ENCODE measurements at regions of chr1 and their contacts with region 1.

Region 1: DNA sequence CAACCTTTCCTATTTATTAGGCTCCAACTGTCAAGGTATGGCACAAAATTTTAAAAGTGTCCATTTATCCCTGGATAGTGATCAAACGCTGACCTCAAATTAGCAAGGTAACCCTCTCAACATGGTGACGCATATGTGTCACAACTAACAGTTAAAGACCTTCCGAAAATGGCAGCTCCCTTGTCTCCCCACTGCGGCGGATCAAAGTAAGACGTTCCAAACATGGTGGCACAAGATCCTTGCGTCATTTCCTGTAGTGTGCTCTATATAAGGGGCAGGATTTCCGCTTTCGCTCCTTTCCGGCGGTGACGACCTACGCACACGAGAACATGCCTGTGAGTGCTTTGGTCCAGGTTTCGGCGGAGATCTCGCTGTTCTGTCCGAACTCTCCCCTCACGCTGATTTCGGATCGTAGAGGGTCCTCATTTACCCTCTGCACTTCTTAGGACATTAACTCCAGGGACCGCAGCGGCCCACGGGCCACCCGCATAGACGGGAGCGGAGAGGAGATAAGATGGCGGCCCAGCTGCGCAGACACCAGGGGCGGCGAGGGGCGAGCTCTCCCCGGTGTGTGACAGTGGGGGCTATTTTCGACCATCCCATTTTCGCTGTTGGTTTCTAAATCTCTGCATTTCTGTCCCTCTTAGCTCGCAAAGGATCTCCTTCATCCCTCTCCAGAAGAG is at the start of gene RPS27:
- DNase-seq: peak; percentile 77 to 98 (median 84)
- ATAC-seq: peak; percentile 85
- H3K4me3 ChIP-seq: peak within 1 kb of the TSS; percentile 71
- H3K4me3 Mint-ChIP-seq: peak within 1 kb of the TSS; percentile 97
- H3K27ac ChIP-seq: peak within 1 kb of the TSS; percentile 97
- H3K27ac Mint-ChIP-seq: peak within 1 kb of the TSS; percentile 96
- H3K4me1 ChIP-seq: peaks cover 40% of the 10 kb centered on the region
- H3K4me1 Mint-ChIP-seq: peaks cover 49% of the 10 kb centered on the region
- H3K27me3 ChIP-seq: peaks cover 0 to 3% of the 10 kb centered on the region in 2 experiments
- H3K27me3 Mint-ChIP-seq: peaks cover 9% of the 10 kb centered on the region
- CTCF ChIP-seq: no peak
- total RNA-seq, gene RPS27: 7,636 to 8,442 TPM

Region 2: GRCh38 chr1:153670859-153671627 is 319.6 kb before region 1 on chr1 and contains the start of gene ILF2:
- CTCF ChIA-PET with region 1: no interaction called
- POLR2A ChIA-PET with region 1: interaction called, 16 read pairs
- intact Hi-C with region 1: loop called (anchors 2 to 5 kb)
- DNase-seq: peak; percentile 94 to 100 (median 97)
- ATAC-seq: peak; percentile 87
- H3K4me3 ChIP-seq: peak within 1 kb of the TSS; percentile 84
- H3K4me3 Mint-ChIP-seq: no peak within 1 kb of the TSS
- H3K27ac ChIP-seq: peak within 1 kb of the TSS; percentile 89 to 91
- H3K27ac Mint-ChIP-seq: no peak within 1 kb of the TSS
- H3K4me1 ChIP-seq: peaks cover 36% of the 10 kb centered on the region
- H3K4me1 Mint-ChIP-seq: peaks cover 25% of the 10 kb centered on the region
- H3K27me3 ChIP-seq: no peaks in the 10 kb centered on the region
- H3K27me3 Mint-ChIP-seq: no peaks in the 10 kb centered on the region
- CTCF ChIP-seq: peak; percentile 28
- total RNA-seq, gene ILF2: 140 to 147 TPM

Region 3: DNA sequence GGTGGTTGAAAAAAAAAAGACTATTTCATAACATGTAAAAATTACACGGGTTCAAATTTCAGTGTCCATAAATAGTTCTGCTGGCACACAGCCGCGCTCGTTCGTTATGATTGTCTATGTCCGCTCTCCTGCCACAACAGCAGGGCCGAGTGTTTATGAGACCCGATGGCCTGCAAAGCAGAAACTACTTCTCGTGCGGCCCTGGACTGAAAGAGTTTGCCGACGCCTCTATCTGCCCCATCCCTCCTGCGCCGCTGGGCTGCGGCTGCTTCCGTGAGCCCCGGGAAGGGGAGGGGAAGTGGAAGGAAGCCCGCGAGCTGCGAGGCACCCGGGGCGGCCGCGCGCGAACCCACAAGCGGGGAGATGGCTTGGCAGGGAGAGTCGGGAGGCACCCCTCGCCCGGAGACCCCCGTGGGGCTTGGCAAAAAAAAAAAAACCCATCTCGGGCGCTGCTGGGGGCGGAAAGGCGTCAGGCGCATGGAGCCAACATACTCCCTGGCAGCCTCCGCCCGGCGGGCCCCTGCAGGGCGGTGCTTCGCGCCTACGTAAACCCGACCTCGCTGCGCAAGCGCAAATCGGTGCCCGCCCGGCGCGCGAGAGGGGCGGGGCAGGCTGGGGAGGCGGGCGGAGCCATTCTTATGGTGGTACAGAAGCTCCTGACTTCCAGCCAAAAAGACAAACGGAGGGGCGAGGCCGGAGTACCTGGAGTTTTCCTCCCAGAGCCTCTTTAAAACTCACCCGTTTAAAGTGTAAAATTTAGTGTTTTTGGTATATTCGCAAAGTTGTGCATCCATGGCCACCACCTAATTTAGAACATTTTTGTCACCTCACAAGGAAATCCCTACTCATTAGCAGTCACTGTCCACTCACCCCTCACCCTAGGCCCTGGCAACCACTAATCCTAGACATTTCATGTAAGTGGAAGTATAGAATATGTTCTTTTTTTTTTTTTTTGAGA is 207.1 kb before region 1 on chr1:
- CTCF ChIA-PET with region 1: interaction called, 3 read pairs
- POLR2A ChIA-PET with region 1: interaction called, 26 read pairs
- intact Hi-C with region 1: no loop called
- DNase-seq: peak; percentile 83 to 95 (median 89)
- ATAC-seq: peak; percentile 95
- H3K4me3 ChIP-seq: peak overlapping the region; percentile 73
- H3K4me3 Mint-ChIP-seq: peak overlapping the region; percentile 94
- H3K27ac ChIP-seq: peak overlapping the region; percentile 96 to 97
- H3K27ac Mint-ChIP-seq: peak overlapping the region; percentile 97
- H3K4me1 ChIP-seq: peaks cover 16% of the 10 kb centered on the region
- H3K4me1 Mint-ChIP-seq: peaks cover 11% of the 10 kb centered on the region
- H3K27me3 ChIP-seq: no peaks in the 10 kb centered on the region
- H3K27me3 Mint-ChIP-seq: peaks cover 8% of the 10 kb centered on the region
- CTCF ChIP-seq: no peak

Region 4: GRCh38 chr1:153816283-153816889 is 174.2 kb before region 1 on chr1:
- CTCF ChIA-PET with region 1: interaction called, 5 read pairs
- POLR2A ChIA-PET with region 1: interaction called, 4 read pairs
- intact Hi-C with region 1: loop called (anchors 1 kb)
- DNase-seq: no peak
- ATAC-seq: no peak
- H3K4me3 ChIP-seq: no peak overlapping the region
- H3K4me3 Mint-ChIP-seq: no peak overlapping the region
- H3K27ac ChIP-seq: no peak overlapping the region
- H3K27ac Mint-ChIP-seq: no peak overlapping the region
- H3K4me1 ChIP-seq: no peaks in the 10 kb centered on the region
- H3K4me1 Mint-ChIP-seq: no peaks in the 10 kb centered on the region
- H3K27me3 ChIP-seq: no peaks in the 10 kb centered on the region
- H3K27me3 Mint-ChIP-seq: no peaks in the 10 kb centered on the region
- CTCF ChIP-seq: no peak

Region 5: DNA sequence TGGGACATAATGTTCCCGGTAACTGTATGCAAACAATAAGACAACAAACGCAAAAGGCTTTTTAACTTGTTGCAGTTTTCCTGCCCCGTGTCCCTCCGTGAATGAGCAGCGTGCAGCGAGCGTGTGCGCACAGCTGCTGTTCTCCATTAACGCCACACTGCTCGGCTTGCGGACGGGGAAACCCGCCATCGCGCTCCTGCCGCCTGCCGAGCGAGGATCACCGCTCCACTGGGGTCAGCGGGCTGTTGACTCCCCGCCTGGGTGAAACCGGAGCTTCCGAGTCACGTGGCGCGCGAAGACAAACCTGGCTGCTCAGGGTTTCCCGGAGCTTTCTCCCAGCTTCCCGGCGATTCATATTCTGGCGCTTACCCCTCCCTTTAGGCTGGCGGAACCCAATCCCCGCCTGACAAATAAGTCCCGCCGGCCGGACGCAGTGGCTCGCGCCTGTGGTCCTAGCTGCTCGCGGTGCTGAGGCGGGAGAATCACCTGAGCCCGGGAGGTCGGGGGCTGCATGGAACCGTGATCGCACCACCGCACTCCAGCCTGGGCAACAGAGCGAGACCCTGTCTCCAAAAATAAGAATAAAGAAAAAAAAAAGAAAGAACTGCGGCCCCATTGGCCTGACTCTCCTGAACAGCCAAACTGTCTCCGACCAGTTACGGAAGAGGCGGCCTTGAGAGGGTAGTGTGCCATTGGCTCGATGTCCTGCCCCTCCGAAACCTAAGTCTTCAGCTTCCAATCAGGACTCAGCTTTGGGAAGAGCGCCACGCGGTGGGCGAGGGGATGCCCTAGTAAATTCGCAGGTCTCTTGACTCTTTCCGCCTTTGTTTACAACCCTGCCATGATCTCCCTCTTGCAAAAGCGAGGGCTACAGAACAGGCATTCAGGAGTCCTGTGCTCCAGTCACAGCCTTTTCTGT is 23.3 kb before region 1 on chr1 and contains the start of gene CREB3L4:
- CTCF ChIA-PET with region 1: interaction called, 16 read pairs
- POLR2A ChIA-PET with region 1: interaction called, 90 read pairs
- intact Hi-C with region 1: loop called in 1 of 2 experiments (anchors 1 kb)
- DNase-seq: peak; percentile 64 to 95 (median 80)
- ATAC-seq: peak; percentile 87
- H3K4me3 ChIP-seq: peak within 1 kb of the TSS; percentile 75
- H3K4me3 Mint-ChIP-seq: peak within 1 kb of the TSS; percentile 96
- H3K27ac ChIP-seq: peak within 1 kb of the TSS; percentile 82 to 83
- H3K27ac Mint-ChIP-seq: peak within 1 kb of the TSS; percentile 94
- H3K4me1 ChIP-seq: peaks cover 60% of the 10 kb centered on the region
- H3K4me1 Mint-ChIP-seq: peaks cover 58% of the 10 kb centered on the region
- H3K27me3 ChIP-seq: no peaks in the 10 kb centered on the region
- H3K27me3 Mint-ChIP-seq: no peaks in the 10 kb centered on the region
- CTCF ChIP-seq: peak; percentile 32
- total RNA-seq, gene CREB3L4: 2.9 to 3.9 TPM

Region 6: GRCh38 chr1:154183045-154183915 is 192.7 kb after region 1 on chr1:
- CTCF ChIA-PET with region 1: no interaction called
- POLR2A ChIA-PET with region 1: interaction called, 24 read pairs
- intact Hi-C with region 1: loop called in 1 of 2 experiments (anchors 2 kb)
- DNase-seq: peak; percentile 85 to 96 (median 92)
- ATAC-seq: peak; percentile 78
- H3K4me3 ChIP-seq: peak overlapping the region; percentile 88
- H3K4me3 Mint-ChIP-seq: peak overlapping the region; percentile 97
- H3K27ac ChIP-seq: peak overlapping the region; percentile 90 to 93
- H3K27ac Mint-ChIP-seq: peak overlapping the region; percentile 96
- H3K4me1 ChIP-seq: peaks cover 46% of the 10 kb centered on the region
- H3K4me1 Mint-ChIP-seq: peaks cover 54% of the 10 kb centered on the region
- H3K27me3 ChIP-seq: no peaks in the 10 kb centered on the region
- H3K27me3 Mint-ChIP-seq: peaks cover 5% of the 10 kb centered on the region
- CTCF ChIP-seq: no peak

Measured in CD4-positive, alpha-beta T cell (primary cell).